Posterior cingulate gyrus (tissue), 11 donors: ENCODE measurements at regions of chr2 and their contacts with region 1.

Region 1: DNA sequence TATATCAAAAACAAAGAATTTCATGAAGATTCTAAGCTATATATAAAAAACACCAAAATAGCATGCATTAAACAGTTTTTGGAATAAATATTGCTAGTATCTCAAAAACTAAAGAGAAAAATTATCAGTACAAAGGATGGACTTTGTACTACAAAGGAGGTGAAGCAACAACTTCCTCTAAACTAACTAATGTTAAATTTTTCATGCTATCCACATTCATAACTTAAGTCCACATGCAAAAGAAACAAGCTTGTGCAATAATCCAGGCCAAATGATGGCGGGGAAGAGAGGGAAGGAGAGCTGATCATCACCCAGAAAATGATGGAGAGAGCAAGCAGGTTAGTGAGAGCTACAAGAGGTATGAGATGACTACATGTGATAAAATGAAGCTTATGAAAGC is 70.1 kb downstream of the KIDINS220 start:
- DNase-seq: no peak

Region 2: GRCh38 chr2:7427293-7428060 is 1339.8 kb before region 1 on chr2:
- intact Hi-C with region 1: loop called (anchors 5 kb)
- DNase-seq: no peak